Heart right ventricle (tissue), 16 donors: ENCODE measurements at regions of chr10 and their contacts with region 1.

Region 1: DNA sequence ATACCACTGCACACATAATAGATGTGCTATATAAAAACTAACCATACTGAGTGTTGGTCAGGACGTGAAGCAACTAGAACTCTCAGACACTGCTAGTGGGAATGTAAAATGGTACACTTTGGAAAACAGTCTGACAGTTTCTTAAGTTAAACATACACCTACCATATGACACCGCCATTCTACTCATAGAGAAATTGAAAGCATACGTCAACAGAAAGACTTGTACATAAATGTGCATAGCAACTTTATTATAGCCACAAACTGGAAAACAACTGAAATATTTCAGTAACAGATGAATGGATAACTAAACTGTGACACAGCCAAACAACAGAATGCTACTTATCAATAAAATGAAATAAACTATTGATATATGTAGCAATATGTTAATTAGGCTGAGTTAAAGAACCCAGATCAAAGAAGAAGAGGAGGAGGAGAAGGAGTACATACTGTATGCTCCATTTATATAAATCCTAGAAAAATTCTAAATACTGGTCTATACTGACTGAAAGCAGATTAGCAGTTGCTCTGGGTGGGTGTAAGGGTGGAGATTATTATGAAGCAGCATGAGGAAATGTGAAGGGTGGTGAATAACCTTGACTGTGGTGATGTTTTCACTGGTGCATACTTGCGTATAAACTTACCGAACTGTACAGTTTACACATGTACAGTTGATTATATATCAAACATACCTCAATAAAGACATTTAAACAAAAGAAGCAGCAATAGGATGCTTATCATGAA is 48.6 kb downstream of the ARHGAP21 start:
- DNase-seq: no peak
- ATAC-seq: no peak
- H3K4me3 ChIP-seq: no peak overlapping the region
- H3K27ac ChIP-seq: no peak overlapping the region
- H3K4me1 ChIP-seq: peaks cover 0 to 32% (median 10%) of the 10 kb centered on the region in 9 donors
- H3K27me3 ChIP-seq: no peaks in the 10 kb centered on the region
- CTCF ChIP-seq: no peak

Region 2: DNA sequence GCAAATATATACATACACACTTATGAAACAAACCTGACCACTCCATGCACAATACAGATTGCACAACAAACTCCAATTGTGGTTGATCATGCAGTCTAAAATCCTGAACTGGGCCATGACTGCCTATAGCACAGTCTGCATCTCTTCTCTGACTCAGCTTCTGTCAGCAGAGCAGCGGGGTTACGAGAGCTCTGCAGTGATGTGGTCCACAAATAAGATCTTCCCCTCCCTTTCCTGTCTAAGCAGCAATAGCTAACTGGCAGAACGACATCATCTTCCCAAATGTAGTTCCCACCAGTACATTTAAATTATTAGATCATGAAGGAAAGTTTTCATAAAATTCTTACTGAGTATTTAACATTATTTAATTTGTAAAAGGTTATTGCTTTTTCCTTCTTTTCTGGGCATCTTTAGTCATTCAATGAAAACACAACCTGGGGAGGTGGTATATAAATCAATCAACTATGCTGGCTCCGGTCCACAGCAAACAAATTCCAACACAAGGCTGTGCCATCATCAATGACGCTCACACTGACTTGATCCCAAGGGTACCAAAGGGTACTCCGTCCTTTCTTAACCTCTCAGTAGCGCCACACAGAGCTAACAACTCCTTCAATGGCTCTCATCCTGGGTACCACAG is 31.5 kb after region 1 on chr10:
- intact Hi-C with region 1: loop called in 1 of 10 experiments (anchors 5 kb)
- DNase-seq: peak in 1 of 2 donors; percentile 22
- ATAC-seq: peak in 7 of 8 donors; percentile 69 to 97 (median 83)
- H3K4me3 ChIP-seq: no peak overlapping the region
- H3K27ac ChIP-seq: peak overlapping the region in 1 of 10 donors; percentile 41
- H3K4me1 ChIP-seq: peaks cover 9 to 91% (median 62%) of the 10 kb centered on the region in 9 donors
- H3K27me3 ChIP-seq: no peaks in the 10 kb centered on the region
- CTCF ChIP-seq: no peak

Region 3: DNA sequence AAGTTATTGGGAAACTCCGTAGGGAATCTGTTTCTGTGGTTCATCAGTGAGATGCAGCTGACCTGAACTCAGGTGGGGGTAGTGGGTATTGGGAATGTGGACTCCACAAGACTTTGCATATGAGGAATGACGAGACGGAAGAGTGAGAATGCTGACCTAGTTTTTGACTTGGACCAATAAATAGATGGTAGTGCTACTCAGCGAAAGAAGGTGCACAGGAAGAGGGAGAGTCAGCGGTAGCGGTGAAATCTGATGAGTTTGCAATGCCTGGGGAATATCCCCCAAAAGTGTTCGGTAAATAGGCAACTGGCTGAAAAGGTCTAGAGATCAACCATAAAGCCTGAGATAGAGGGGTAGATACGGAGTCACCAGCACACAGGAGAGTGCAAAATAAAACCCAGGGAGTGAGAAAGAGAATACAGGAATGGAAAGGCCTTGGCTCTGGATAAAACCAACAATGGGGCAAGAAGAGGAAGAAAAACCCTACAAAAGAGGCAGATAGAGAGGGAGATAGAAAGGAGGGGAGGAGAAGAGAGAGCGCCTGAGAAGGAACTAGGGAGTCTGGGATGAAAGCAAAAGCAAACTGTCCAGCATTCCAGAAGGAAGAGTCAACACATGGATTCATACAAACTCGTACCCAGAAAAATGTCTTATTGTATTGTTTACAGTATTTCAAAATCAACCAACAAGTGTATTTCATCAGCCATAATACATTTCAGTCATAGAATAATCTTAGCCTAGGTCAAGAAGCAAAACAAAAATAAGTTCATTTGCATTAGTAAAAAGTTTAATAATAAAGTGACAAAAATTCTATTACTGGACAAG is 43.2 kb after region 1 on chr10:
- intact Hi-C with region 1: loop called in 1 of 10 experiments (anchors 5 kb)
- DNase-seq: no peak
- ATAC-seq: no peak
- H3K4me3 ChIP-seq: peak overlapping the region in 5 of 10 donors; percentile 1 to 86 (median 23)
- H3K27ac ChIP-seq: no peak overlapping the region
- H3K4me1 ChIP-seq: peaks cover 2 to 88% (median 80%) of the 10 kb centered on the region in 9 donors
- H3K27me3 ChIP-seq: no peaks in the 10 kb centered on the region
- CTCF ChIP-seq: no peak

Region 4: DNA sequence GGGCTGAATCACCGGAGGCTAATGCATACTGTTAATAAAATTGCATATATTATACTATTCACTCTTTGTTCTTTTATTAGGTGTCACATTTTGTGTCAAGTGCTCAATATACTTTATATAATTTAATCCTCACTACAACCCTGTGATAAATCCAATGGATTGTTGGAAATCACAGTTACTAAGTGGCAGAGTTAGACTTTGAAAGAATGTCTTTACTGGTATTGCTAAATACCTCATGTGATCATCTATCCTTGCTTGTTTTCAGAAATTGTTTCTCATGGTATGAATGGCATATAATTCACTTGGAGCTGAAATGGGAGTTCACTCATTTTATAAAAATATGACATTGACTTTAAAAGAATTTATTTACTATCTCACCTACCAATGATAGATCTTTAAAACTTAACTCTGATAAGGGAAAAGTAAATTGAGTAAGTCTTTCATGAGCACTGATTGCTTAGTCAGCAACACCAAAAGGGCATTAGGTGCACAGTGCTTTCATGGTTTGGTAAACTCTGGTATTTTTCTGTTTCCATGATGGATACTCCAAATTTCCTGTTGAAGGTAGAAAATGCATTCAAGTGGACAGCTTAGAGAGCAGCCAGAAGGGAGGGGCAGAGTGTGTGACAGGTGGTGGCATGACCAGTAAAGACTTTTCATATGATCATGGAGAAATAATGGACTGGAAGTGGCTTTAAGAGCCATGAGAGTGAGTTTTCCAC is 318.3 kb after region 1 on chr10:
- intact Hi-C with region 1: no loop called
- DNase-seq: no peak
- ATAC-seq: no peak
- H3K4me3 ChIP-seq: no peak overlapping the region
- H3K27ac ChIP-seq: no peak overlapping the region
- H3K4me1 ChIP-seq: peaks cover 0 to 10% (median 0%) of the 10 kb centered on the region in 9 donors
- H3K27me3 ChIP-seq: no peaks in the 10 kb centered on the region
- CTCF ChIP-seq: no peak